Left ventricle myocardium superior (tissue), 1 donor: ENCODE measurements at regions of chrX and their contacts with region 1.

Region 1: DNA sequence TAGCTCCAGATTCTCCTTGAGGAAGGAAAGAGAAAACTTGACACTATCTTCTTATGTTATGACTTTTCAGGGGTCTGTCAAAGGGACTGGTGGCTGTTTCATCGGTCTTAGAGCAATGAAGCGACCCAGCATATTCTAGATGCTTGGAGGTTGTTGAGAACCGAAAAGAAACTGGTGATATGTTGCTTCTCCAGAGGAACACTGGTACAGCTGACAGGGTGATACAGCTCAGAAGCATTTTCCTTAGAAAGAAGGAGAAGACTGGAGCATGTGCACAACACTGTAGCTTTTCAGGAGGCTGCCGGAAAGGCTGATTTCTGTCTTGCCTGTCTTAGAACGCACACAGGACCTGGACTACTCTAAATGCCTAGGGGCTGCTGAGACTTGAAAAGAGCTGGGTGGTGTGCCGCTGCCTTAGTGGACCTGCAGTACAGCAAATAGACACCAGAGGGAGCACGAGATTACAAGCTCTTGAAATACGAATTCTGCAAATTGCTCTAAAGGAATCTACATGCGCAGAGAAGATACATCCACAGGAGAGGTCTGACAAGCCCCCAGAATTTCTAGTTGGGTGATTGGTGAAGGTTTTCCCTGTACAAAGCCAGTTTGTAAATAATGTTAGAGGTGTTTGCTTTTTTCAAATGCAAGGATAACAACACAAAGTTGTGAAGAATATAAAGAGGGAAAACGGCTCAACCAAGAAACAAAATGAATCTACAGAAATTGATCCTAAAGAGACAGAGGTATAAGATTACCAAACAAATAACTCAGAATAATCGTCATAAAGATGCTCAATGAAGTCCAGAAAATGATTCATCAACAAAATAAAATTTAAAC is 223.1 kb upstream of the DMD start:
- DNase-seq: peak; percentile 18
- ATAC-seq: peak; percentile 23

Region 2: DNA sequence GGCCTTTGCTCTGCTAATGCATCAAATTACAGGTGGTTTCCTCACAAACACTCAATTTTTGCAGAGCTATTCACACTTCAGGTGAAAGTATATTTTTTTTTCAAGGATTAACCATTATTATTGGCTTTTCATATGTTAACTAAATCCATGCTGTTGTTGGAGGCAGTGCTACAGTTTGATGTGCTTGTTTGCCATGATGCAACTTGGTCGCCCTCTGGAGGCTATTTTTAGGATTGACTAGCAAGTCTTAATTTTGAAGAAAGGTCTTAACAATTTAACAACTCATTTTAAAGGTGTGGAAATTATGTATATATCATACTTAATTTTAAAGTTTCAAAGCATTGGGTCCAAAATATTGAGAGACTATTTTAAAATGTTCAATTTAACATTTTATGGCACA is 866.4 kb after region 1 on chrX:
- intact Hi-C with region 1: loop called (anchors 10 kb)
- DNase-seq: no peak
- ATAC-seq: no peak